Esophagus squamous epithelium (tissue), 5 donors: ENCODE measurements at regions of chr12 and their contacts with region 1.

Region 1: DNA sequence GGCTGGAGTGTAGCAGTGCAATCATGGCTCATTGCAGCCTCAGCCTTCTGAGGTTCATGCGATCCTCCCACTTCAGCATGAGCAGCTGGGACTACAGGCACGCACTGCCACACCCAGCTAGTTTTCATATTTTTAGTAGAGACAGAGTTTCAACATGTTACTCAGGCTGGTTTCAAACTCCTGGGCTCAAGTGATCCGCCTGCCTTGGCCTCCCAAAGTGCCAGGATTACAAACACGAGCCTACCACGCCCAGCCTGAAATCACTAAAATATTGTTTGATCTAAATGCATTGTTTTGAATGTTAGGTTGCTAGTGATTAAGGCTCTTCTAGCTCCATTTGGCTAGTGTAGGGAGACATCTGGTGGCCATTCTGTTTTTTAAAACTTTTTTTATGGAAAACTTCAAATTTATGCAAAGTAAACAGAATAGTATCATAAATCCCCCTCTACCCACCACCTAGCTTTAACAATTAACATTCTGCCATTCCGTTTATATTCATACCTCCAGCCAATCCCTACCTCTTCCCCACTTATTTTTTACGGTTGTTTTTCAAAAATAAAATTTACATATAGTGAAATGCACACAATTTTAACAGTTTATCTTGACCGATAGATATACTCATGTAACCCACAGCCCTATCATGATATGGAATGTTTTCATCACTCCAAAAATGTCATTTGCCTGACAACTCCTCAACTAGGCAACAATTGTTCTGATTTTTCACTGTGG is 37.8 kb downstream of the MYO1H start:
- DNase-seq: no peak
- H3K4me3 ChIP-seq: no peak overlapping the region
- H3K27ac ChIP-seq: no peak overlapping the region
- H3K4me1 ChIP-seq: peaks cover 0 to 14% (median 0%) of the 10 kb centered on the region in 3 donors
- H3K27me3 ChIP-seq: peaks cover 0 to 9% (median 0%) of the 10 kb centered on the region in 4 donors
- CTCF ChIP-seq: peak; percentile 18 to 58 (median 42)
- POLR2A ChIP-seq: no peak

Region 2: DNA sequence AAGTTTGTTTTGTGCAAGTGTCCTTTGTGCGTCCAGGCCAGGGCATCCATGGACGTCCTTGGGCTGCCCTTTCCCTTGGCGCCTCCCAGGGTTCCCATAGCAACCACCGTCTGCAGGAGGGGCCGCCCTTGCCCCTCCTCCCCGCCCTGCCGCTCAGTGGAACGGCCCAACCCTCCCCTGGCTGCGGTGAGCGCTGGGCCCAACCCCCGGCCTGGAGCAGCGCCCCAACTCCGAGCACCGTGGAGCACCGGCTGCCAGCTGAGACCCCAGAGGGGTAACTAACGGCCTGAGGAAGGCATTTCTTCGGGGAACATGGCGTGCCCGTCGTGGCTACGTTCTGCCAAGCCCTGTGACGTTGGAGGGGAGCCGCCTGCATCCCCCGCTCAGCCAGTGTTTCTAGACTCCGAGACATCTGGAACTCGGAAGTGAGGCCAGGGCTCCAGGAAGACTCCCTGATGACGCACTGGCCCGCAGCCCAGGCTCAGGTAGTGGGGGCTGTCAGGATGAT is 274.5 kb before region 1 on chr12:
- intact Hi-C with region 1: loop called (anchors 10 kb)
- DNase-seq: no peak
- H3K4me3 ChIP-seq: peak overlapping the region; percentile 33 to 72 (median 58)
- H3K27ac ChIP-seq: peak overlapping the region; percentile 75 to 95 (median 90)
- H3K4me1 ChIP-seq: peaks cover 9 to 63% (median 34%) of the 10 kb centered on the region in 3 donors
- H3K27me3 ChIP-seq: no peaks in the 10 kb centered on the region
- CTCF ChIP-seq: peak in 1 of 6 experiments; percentile 30
- POLR2A ChIP-seq: peak in 3 of 4 donors; percentile 15 to 63 (median 52)

Region 3: DNA sequence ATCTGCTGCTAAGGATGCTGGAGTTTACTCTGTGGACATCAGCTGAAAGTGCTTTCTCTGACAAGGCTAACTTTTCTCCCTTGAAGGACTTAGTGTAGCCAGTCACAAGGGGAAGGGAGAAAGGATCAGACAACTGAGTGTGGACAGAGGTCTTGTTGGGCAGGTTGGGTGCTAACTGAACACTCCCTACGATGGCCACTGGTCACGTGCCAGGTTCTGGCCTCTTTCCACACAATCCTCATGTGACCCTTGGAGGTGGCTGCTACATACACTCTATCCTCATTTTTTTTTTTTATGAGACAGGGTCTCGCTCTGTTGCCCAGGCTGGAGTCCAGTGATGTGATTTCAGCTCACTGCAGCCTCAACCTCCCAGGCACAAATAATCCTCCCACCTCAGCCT is 116.1 kb before region 1 on chr12:
- intact Hi-C with region 1: loop called (anchors 2 kb)
- DNase-seq: no peak
- H3K4me3 ChIP-seq: no peak overlapping the region
- H3K27ac ChIP-seq: no peak overlapping the region
- H3K4me1 ChIP-seq: no peaks in the 10 kb centered on the region
- H3K27me3 ChIP-seq: no peaks in the 10 kb centered on the region
- CTCF ChIP-seq: no peak
- POLR2A ChIP-seq: no peak